Activated B cell treated with CpG ODN at 0.5 μM for 24 hours (primary cell): ENCODE measurements at regions of chr1 and their contacts with region 1.

Region 1: DNA sequence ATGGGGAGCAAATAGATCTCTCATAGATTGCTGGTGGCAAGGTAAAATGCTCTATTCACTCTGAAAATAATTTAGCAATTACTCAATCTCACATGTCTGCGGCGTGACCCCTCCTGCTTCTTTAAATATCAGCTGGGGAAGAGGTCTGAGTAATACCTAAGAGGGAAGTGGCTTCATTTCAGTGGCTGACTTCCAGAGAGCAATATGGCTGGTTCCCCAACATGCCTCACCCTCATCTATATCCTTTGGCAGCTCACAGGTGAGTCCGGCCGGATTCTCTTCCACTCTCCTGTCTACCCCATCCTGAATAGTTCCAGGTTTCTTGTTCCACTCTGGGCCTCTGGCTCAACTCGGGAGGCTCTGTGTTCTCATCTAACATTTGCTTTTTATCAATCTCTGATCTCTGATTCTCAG is at the start of gene SLAMF7:
- DNase-seq: peak; percentile 32
- ATAC-seq: peak; percentile 94
- H3K4me3 Mint-ChIP-seq: peak within 1 kb of the TSS; percentile 88
- H3K27ac Mint-ChIP-seq: peak within 1 kb of the TSS; percentile 90
- H3K4me1 Mint-ChIP-seq: peaks cover 72% of the 10 kb centered on the region
- H3K27me3 Mint-ChIP-seq: no peaks in the 10 kb centered on the region
- CTCF ChIP-seq: no peak
- total RNA-seq, gene SLAMF7: 99.2 and 119 TPM in 2 replicates

Region 2: DNA sequence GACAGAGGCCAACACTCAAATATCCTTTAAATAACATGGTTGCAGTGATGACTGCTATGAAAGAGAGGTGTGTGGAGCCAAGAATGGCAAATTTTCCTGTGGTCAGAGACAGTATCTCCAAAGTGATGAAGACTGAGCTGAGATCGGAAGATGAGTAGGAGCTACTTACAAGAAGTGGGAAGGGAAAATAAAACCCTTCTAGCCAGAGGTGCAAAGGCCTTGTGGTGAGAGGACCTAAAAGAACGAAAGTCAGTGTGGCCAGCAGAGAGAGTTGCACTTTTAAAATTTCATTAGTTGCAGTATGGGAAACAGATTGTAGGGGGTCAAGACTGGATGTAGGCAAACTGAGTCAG is 17.7 kb after region 1 on chr1:
- CTCF ChIA-PET with region 1: interaction called, 4 read pairs
- POLR2A ChIA-PET with region 1: interaction called, 3 read pairs
- intact Hi-C with region 1: loop called (anchors 2 kb)
- DNase-seq: no peak
- ATAC-seq: no peak
- H3K4me3 Mint-ChIP-seq: no peak overlapping the region
- H3K27ac Mint-ChIP-seq: no peak overlapping the region
- H3K4me1 Mint-ChIP-seq: peaks cover 20% of the 10 kb centered on the region
- H3K27me3 Mint-ChIP-seq: no peaks in the 10 kb centered on the region
- CTCF ChIP-seq: no peak

Region 3: GRCh38 chr1:160795951-160796383 is 56.9 kb after region 1 on chr1 and contains the start of gene LY9:
- CTCF ChIA-PET with region 1: no interaction called
- POLR2A ChIA-PET with region 1: interaction called, 11 read pairs
- intact Hi-C with region 1: loop called (anchors 2 kb)
- DNase-seq: peak; percentile 46
- ATAC-seq: peak; percentile 87
- H3K4me3 Mint-ChIP-seq: peak within 1 kb of the TSS; percentile 95
- H3K27ac Mint-ChIP-seq: peak within 1 kb of the TSS; percentile 99
- H3K4me1 Mint-ChIP-seq: peaks cover 81% of the 10 kb centered on the region
- H3K27me3 Mint-ChIP-seq: no peaks in the 10 kb centered on the region
- CTCF ChIP-seq: no peak
- total RNA-seq, gene LY9: 63.6 and 71.6 TPM in 2 replicates

Region 4: DNA sequence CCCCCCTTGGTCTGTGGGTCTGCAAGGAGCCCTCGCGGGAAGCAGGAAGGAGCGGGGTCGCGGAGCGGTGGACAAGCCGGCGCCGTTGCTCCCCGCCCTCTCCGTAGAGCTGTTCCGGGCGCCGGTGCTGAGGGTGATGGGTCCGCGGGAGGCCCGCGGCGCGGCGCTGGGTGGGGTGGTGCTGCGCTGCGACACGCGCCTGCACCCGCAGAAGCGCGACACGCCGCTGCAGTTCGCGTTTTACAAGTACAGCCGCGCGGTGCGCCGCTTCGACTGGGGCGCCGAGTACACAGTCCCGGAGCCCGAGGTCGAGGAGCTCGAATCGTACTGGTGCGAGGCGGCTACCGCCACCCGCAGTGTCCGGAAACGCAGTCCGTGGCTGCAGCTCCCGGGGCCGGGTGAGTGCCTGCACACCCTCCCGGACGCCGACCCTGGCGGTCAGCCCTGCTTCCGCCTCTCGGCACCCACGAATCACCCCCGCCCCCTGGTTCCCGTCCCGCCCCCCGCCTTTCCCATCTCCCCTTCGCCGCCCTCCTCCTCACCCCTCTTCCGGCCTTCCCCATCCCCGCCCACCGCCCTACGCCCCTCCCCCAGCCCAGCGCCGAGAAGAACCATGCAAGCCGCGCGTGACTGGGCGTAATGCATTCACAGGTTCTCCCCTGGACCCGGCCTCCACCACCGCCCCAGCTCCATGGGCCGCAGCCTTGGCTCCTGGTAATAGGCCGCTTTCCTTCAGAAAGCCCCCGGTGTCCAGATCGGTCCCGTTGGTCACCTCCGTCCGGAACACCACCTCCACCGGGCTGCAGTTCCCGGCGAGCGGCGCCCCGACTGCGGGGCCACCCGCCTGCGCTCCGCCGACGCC is 987.7 kb after region 1 on chr1:
- CTCF ChIA-PET with region 1: no interaction called
- POLR2A ChIA-PET with region 1: interaction called, 11 read pairs
- intact Hi-C with region 1: no loop called
- DNase-seq: peak; percentile 70
- ATAC-seq: peak; percentile 72
- H3K4me3 Mint-ChIP-seq: peak overlapping the region; percentile 96
- H3K27ac Mint-ChIP-seq: peak overlapping the region; percentile 94
- H3K4me1 Mint-ChIP-seq: peaks cover 61% of the 10 kb centered on the region
- H3K27me3 Mint-ChIP-seq: no peaks in the 10 kb centered on the region
- CTCF ChIP-seq: no peak